CD4-positive, alpha-beta memory T cell (primary cell): ENCODE measurements at regions of chr1 and their contacts with region 1.

Region 1: GRCh38 chr1:54070171-54070837 is 16.9 kb downstream of the TCEANC2 start:
- DNase-seq: peak in 4 of 5 donors; percentile 55 to 61 (median 56)
- H3K4me3 ChIP-seq: no peak overlapping the region
- H3K4me3 Mint-ChIP-seq: peak overlapping the region in 1 of 8 donors; percentile 0
- H3K27ac ChIP-seq: no peak overlapping the region
- H3K27ac Mint-ChIP-seq: peak overlapping the region in 1 of 7 donors; percentile 2
- H3K4me1 ChIP-seq: no peaks in the 10 kb centered on the region
- H3K4me1 Mint-ChIP-seq: peaks cover 0 to 2% (median 0%) of the 10 kb centered on the region in 4 donors
- H3K27me3 ChIP-seq: no peaks in the 10 kb centered on the region
- H3K27me3 Mint-ChIP-seq: no peaks in the 10 kb centered on the region

Region 2: GRCh38 chr1:54671985-54672608 is 601.8 kb after region 1 on chr1:
- CTCF ChIA-PET with region 1: no interaction called
- POLR2A ChIA-PET with region 1: no interaction called
- intact Hi-C with region 1: loop called (anchors 1 kb)
- DNase-seq: peak; percentile 51 to 66 (median 58)
- H3K4me3 ChIP-seq: no peak overlapping the region
- H3K4me3 Mint-ChIP-seq: no peak overlapping the region
- H3K27ac ChIP-seq: no peak overlapping the region
- H3K27ac Mint-ChIP-seq: peak overlapping the region in 2 of 7 donors; percentile 46 to 56
- H3K4me1 ChIP-seq: no peaks in the 10 kb centered on the region
- H3K4me1 Mint-ChIP-seq: peaks cover 1 to 6% (median 4%) of the 10 kb centered on the region in 4 donors
- H3K27me3 ChIP-seq: no peaks in the 10 kb centered on the region
- H3K27me3 Mint-ChIP-seq: peaks cover 0 to 6% of the 10 kb centered on the region in 2 donors

Region 3: DNA sequence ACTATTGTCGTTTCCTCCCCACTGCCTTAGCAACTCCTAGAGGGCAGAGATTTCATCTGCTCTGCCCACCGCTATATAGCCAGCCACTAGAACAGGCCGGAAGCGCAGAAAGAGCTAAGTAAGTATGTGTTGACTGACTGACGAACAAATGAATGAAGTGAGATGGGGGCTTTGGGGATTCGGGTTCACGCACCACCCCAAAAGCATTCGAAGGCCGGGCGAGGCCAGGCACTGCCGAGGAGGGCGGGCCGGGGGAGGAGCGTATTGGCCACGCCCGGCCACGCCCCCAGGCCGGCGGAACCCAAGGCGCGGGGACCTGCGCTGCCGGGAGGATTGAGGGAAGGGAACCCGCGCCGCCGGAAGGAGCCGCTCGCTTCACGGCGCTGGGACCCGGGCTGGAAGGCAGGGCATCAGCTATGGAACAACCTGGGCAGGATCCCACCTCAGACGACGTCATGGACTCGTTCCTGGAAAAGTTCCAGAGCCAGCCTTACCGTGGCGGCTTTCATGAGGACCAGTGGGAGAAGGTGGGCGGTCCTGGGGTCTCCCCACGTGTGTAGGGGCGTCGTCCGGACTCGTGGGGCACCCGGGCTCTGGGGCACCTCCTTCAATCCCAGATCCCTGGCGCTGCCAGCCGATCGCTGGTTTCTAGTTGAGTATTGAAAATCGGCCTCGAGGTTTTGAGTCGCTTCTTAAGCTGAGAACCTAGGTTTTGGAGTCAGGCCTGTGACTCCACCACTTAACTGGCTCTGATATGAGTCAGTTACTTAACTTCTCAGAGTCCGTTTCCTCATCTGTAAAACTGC is 645.4 kb after region 1 on chr1 and contains the start of gene TTC4:
- CTCF ChIA-PET with region 1: no interaction called
- POLR2A ChIA-PET with region 1: no interaction called
- intact Hi-C with region 1: loop called (anchors 5 kb)
- DNase-seq: peak; percentile 70 to 89 (median 85)
- H3K4me3 ChIP-seq: peak within 1 kb of the TSS; percentile 76 to 96
- H3K4me3 Mint-ChIP-seq: peak within 1 kb of the TSS; percentile 78 to 93 (median 91)
- H3K27ac ChIP-seq: peak within 1 kb of the TSS; percentile 78
- H3K27ac Mint-ChIP-seq: peak within 1 kb of the TSS; percentile 47 to 98 (median 94)
- H3K4me1 ChIP-seq: peaks cover 17% of the 10 kb centered on the region
- H3K4me1 Mint-ChIP-seq: peaks cover 22 to 38% (median 31%) of the 10 kb centered on the region in 4 donors
- H3K27me3 ChIP-seq: no peaks in the 10 kb centered on the region
- H3K27me3 Mint-ChIP-seq: no peaks in the 10 kb centered on the region
- total RNA-seq, gene TTC4: 20.0 to 24.5 TPM

Region 4: DNA sequence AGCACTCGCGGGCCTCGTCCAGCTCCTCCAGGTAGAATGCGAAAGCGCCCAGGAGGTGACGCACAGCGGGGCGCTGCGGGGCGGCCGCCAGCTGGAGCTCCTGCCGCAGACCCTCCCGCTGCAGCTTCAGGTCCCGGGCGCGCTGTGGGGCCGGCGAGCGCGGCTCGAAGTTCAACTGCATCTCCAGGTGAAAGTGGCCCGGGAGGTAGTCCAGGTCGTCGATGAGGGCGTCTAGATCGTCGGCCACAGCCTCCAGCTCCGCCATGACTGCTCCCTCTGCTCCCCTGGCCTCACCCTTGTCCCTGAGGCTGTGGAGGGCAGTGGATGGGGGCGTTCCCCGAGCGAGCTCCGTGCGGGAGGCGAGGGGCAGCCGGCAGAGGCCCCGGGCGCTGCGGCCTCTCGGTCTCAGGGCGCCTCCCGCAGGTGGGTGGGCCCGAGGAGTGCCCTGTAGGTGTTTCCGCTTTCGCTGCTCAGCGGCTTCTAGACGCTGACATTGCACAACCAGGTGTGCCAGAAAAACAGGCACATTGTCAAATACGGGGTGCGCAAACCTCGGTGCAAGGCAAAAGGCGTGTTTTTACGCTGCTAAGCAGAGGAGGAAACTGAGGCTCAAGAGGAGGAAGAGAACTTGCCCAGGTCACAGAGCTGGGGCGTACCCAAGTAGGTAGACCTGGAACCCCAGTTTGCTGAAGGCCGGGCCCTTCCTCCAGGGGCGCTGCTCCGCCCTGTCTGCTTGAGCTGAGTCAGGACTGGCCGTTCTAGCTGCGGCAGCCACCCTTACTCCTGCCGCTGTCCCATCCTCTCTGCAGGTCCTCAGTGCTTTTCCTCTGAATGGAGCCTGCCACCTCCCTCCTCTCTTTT is 730.8 kb after region 1 on chr1 and contains the start of gene TTC22:
- CTCF ChIA-PET with region 1: interaction called, 5 read pairs
- POLR2A ChIA-PET with region 1: no interaction called
- intact Hi-C with region 1: loop called (anchors 2 kb)
- DNase-seq: peak; percentile 65 to 77 (median 70)
- H3K4me3 ChIP-seq: peak within 1 kb of the TSS; percentile 89 to 90
- H3K4me3 Mint-ChIP-seq: peak within 1 kb of the TSS; percentile 90 to 99 (median 96)
- H3K27ac ChIP-seq: peak within 1 kb of the TSS; percentile 68
- H3K27ac Mint-ChIP-seq: peak within 1 kb of the TSS; percentile 89 to 98 (median 96)
- H3K4me1 ChIP-seq: peaks cover 46% of the 10 kb centered on the region
- H3K4me1 Mint-ChIP-seq: peaks cover 40 to 73% (median 57%) of the 10 kb centered on the region in 4 donors
- H3K27me3 ChIP-seq: no peaks in the 10 kb centered on the region
- H3K27me3 Mint-ChIP-seq: no peaks in the 10 kb centered on the region
- total RNA-seq, gene TTC22: 18.6 to 19.0 TPM

Region 5: GRCh38 chr1:55604749-55605148 is 1534.4 kb after region 1 on chr1:
- CTCF ChIA-PET with region 1: no interaction called
- POLR2A ChIA-PET with region 1: no interaction called
- intact Hi-C with region 1: no loop called
- DNase-seq: no peak
- H3K4me3 ChIP-seq: no peak overlapping the region
- H3K4me3 Mint-ChIP-seq: no peak overlapping the region
- H3K27ac ChIP-seq: no peak overlapping the region
- H3K27ac Mint-ChIP-seq: no peak overlapping the region
- H3K4me1 ChIP-seq: no peaks in the 10 kb centered on the region
- H3K4me1 Mint-ChIP-seq: no peaks in the 10 kb centered on the region
- H3K27me3 ChIP-seq: no peaks in the 10 kb centered on the region
- H3K27me3 Mint-ChIP-seq: peaks cover 5% of the 10 kb centered on the region in 2 donors